ENCODE measurements at regions of chr21 and their contacts with region 1.

Region 1: GRCh38 chr21:44510508-44511210 is 29.3 kb downstream of the KRTAP10-1 start:
- DNase-seq: no peak
- ATAC-seq: peak; percentile 21

Region 2: DNA sequence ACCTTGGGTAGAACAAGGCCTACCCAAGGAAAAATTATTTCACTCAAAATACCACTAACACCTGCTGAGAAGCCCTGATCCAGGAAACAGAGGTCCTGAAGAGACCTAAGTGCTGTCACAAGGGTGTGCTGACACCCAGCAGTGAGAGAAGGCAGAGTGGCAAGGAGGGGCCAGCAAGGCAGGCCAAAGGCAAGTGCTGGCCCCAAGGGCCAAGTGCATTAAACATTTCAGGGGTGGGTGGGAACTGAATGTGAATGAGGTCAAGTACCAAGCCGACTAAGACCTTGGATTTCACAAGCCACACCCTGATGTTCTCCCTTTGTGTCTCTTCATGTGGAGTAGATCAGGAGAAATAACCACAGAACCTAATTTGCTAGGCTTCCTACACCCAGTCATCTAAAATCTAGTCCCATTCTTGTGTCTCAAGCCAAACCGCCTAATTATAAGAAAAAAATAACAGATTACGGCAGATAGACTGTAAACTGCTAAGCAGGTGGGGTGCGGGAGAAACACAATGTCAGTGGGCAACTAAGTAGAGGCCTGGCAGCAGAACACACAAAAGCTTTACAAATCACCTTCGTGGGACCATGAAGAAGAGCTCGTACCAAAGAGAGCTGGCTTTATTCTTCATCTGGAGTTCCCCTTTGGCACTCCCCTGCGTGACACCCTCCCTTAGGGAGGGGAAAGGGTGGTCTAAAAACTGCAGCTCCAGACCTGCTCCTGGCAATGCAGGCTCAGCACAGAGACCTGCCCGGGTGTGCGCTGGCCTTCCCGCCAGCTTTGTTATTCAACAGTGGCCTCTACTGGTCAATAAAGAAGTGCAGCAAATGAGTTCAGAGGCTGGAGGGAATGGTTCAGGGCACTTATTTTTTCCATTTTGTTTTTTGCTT is 282.3 kb after region 1 on chr21:
- intact Hi-C with region 1: loop called (anchors 10 kb)
- DNase-seq: peak; percentile 68
- ATAC-seq: peak; percentile 92

Region 3: GRCh38 chr21:45236481-45236880 is 725.8 kb after region 1 on chr21:
- intact Hi-C with region 1: no loop called
- DNase-seq: no peak
- ATAC-seq: no peak

Measured in sciatic nerve (tissue), 2 donors.